HEK293T (cell line): ENCODE measurements at regions of chr3 and their contacts with region 1.

Region 1: GRCh38 chr3:127598841-127599570 is 795 bp downstream of the MCM2 start:
- DNase-seq: no peak

Region 2: DNA sequence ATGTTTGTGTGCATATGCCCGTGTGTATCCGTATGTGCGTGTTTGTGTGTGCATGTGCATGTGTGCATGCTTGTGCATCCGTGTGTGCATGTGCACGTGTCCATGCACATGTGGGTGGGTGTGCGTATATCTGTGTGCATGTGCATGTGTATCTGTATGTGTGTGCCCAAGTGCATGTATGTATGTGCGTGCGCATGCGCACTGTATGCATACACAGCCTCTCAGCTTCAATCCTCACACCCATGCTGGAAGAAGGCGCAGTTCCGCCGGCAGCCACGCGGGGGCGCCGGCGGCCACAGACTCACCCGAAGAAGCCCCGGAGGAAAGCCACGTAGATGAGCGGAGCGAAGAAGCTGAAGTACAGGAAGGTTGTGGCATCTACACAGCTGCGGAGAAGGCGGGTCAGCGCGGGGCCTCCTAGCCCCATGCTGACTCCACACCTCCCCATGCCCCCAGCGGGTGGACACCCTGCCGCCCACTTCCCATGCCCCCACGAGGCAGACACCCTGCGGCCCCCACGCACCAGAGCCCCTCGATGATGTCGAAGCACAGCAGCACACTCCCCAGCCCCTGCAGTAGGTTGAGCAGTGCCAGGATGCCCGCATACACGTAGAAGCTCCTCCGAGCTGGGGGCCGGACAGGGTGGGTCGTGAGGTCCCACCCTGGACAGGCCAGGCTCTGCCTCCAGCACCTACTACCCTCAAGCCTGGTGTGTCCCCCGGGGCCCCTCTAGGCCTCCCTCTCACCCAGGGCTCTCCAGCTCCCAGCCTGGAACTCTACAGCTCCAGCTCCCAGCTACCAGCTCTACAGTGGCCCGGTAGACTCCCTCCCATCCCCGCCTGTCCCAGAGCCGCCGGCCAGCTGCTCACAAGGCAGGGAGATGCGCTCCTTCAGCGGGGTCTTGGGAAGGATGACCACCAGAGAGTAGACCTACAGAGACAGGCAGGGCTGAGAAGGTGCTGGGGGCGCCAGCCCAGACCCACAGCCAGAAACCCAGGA is 23.8 kb before region 1 on chr3:
- CTCF ChIA-PET with region 1: interaction called, 5 read pairs
- POLR2A ChIA-PET with region 1: interaction called, 13 read pairs
- DNase-seq: peak; percentile 95

Region 3: GRCh38 chr3:127580327-127581060 is 18.5 kb before region 1 on chr3:
- CTCF ChIA-PET with region 1: interaction called, 5 read pairs
- POLR2A ChIA-PET with region 1: interaction called, 13 read pairs
- DNase-seq: no peak

Region 4: GRCh38 chr3:127620637-127621375 is 21.8 kb after region 1 on chr3:
- CTCF ChIA-PET with region 1: no interaction called
- POLR2A ChIA-PET with region 1: interaction called, 12 read pairs
- DNase-seq: no peak